ENCODE measurements at regions of chr2 and their contacts with region 1.

Region 1: DNA sequence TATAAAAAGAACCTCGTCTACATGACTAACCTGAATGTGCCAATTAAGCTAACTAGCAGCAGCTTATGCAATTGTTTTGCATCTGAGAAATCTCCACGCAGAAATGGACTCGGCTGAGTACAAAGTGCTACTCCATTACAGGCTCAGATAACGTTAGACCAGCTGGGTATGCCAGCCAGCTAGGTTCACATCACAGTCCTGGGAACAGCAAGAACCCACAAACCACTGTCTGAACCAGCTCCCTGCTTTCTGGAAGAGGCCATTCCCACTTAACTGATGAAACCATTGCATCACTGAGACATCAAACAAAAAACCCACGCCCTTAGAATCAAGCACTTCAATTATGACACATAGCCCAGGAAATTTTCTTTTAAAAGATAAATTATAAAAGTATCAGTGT is 202.7 kb downstream of the CYRIA start:
- DNase-seq: no peak
- ATAC-seq: no peak
- H3K4me3 Mint-ChIP-seq: no peak overlapping the region
- H3K27ac Mint-ChIP-seq: no peak overlapping the region
- H3K4me1 Mint-ChIP-seq: no peaks in the 10 kb centered on the region
- H3K27me3 Mint-ChIP-seq: peaks cover 9% of the 10 kb centered on the region
- CTCF ChIP-seq: no peak

Region 2: GRCh38 chr2:16430846-16431245 is 32.1 kb before region 1 on chr2:
- CTCF ChIA-PET with region 1: no interaction called
- POLR2A ChIA-PET with region 1: no interaction called
- intact Hi-C with region 1: loop called (anchors 1 kb)
- DNase-seq: no peak
- ATAC-seq: no peak
- H3K4me3 Mint-ChIP-seq: no peak overlapping the region
- H3K27ac Mint-ChIP-seq: no peak overlapping the region
- H3K4me1 Mint-ChIP-seq: no peaks in the 10 kb centered on the region
- H3K27me3 Mint-ChIP-seq: peaks cover 1% of the 10 kb centered on the region
- CTCF ChIP-seq: no peak

Region 3: DNA sequence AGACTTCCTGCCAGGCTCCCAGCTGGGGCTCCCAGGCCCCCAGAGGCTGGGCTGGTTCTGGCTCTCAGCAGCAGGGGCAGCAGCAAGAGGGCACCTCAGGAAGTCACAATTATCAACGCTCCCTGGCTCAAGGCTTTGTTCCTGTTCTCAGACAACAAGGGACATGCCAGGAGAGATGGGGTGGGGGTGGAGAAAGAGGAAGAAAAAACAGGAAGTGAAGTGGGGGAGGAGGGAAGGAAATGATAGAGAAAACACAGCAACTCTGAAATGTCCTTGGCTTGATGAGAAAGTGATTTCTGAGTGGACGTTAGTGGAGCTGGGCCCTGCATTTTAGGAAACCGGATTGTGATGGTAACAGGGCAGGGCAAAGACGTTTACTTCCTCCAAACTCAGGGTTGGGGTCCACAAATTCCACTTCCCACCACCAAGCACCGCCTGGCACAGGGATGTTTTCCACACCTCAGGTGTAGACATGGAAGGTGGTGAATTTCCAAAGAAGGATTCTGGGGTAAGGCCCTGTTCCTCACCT is 162.3 kb after region 1 on chr2:
- CTCF ChIA-PET with region 1: no interaction called
- POLR2A ChIA-PET with region 1: no interaction called
- intact Hi-C with region 1: no loop called
- DNase-seq: no peak
- ATAC-seq: no peak
- H3K4me3 Mint-ChIP-seq: no peak overlapping the region
- H3K27ac Mint-ChIP-seq: no peak overlapping the region
- H3K4me1 Mint-ChIP-seq: peaks cover 12% of the 10 kb centered on the region
- H3K27me3 Mint-ChIP-seq: peaks cover 1% of the 10 kb centered on the region
- CTCF ChIP-seq: no peak